ENCODE measurements at regions of chr19 and their contacts with region 1.

Region 1: GRCh38 chr19:58278157-58279041 is at the start of gene ZNF8:
- DNase-seq: peak; percentile 93 to 97 (median 95)
- H3K4me3 ChIP-seq: peak within 1 kb of the TSS; percentile 62 to 92
- H3K4me3 Mint-ChIP-seq: peak within 1 kb of the TSS; percentile 93 to 100 (median 98)
- H3K27ac ChIP-seq: peak within 1 kb of the TSS; percentile 73
- H3K27ac Mint-ChIP-seq: peak within 1 kb of the TSS; percentile 91 to 99 (median 96)
- H3K4me1 ChIP-seq: peaks cover 36% of the 10 kb centered on the region
- H3K4me1 Mint-ChIP-seq: peaks cover 28 to 57% (median 36%) of the 10 kb centered on the region in 4 donors
- H3K27me3 ChIP-seq: no peaks in the 10 kb centered on the region
- H3K27me3 Mint-ChIP-seq: no peaks in the 10 kb centered on the region
- total RNA-seq, gene ZNF8: 9.5 to 10.2 TPM

Region 2: DNA sequence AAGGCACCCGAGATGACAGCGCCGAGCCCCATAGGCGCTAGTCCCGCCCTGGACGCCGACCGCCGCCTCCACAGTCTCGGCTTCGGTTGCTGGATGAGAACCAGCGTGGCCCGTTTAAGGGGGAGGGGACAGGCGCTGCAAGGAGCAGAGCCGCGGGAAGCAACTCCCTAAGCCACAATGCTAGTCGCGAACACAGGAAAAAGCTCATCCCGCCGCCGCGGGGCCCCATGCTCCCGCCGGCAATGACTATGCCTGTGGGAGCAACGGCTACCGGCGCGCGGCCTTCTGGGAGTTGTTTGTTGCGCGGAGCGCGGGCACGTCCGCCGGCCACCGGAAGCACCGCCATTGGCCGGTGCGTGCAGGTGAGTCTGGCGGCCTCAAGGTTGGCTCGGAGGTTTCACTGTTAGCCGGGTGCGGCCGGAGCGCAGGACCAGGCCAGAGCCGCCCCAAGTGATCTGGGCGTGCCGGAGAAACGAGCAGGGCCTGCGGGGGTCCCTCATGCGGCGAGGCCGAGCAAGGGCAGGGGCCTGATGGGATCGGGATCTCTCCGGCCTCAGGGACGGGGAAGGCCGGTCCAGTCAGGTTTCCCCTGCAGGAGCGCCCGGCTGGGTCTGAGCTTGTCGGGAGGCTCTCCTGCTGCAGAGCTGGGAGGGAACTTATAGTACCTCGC is 49.7 kb before region 1 on chr19 and contains the start of gene ZNF544:
- CTCF ChIA-PET with region 1: interaction called, 3 read pairs
- POLR2A ChIA-PET with region 1: interaction called, 5 read pairs
- intact Hi-C with region 1: loop called (anchors 1 kb)
- DNase-seq: peak; percentile 33 to 60 (median 41)
- H3K4me3 ChIP-seq: peak within 1 kb of the TSS; percentile 68 to 70
- H3K4me3 Mint-ChIP-seq: peak within 1 kb of the TSS; percentile 92 to 97 (median 94)
- H3K27ac ChIP-seq: peak within 1 kb of the TSS; percentile 50
- H3K27ac Mint-ChIP-seq: peak within 1 kb of the TSS; percentile 82 to 95 (median 88)
- H3K4me1 ChIP-seq: peaks cover 15% of the 10 kb centered on the region
- H3K4me1 Mint-ChIP-seq: peaks cover 15 to 31% (median 24%) of the 10 kb centered on the region in 4 donors
- H3K27me3 ChIP-seq: no peaks in the 10 kb centered on the region
- H3K27me3 Mint-ChIP-seq: no peaks in the 10 kb centered on the region
- total RNA-seq, gene ZNF544: 63.3 to 67.6 TPM

Region 3: GRCh38 chr19:58326914-58327726 is 48.7 kb after region 1 on chr19 and contains the start of gene ZSCAN22:
- CTCF ChIA-PET with region 1: no interaction called
- POLR2A ChIA-PET with region 1: interaction called, 3 read pairs
- intact Hi-C with region 1: loop called (anchors 1 kb)
- DNase-seq: peak; percentile 80 to 89 (median 83)
- H3K4me3 ChIP-seq: peak within 1 kb of the TSS; percentile 32 to 77
- H3K4me3 Mint-ChIP-seq: no peak within 1 kb of the TSS
- H3K27ac ChIP-seq: peak within 1 kb of the TSS; percentile 80
- H3K27ac Mint-ChIP-seq: no peak within 1 kb of the TSS
- H3K4me1 ChIP-seq: peaks cover 25% of the 10 kb centered on the region
- H3K4me1 Mint-ChIP-seq: peaks cover 0 to 2% (median under 1%) of the 10 kb centered on the region in 4 donors
- H3K27me3 ChIP-seq: no peaks in the 10 kb centered on the region
- H3K27me3 Mint-ChIP-seq: no peaks in the 10 kb centered on the region
- total RNA-seq, gene ZSCAN22: 5.0 to 5.3 TPM

Region 4: GRCh38 chr19:58386576-58387337 is 108.4 kb after region 1 on chr19 and contains the start of gene RPS5:
- CTCF ChIA-PET with region 1: no interaction called
- POLR2A ChIA-PET with region 1: interaction called, 3 read pairs
- intact Hi-C with region 1: loop called (anchors 1 kb)
- DNase-seq: peak; percentile 94 to 99 (median 98)
- H3K4me3 ChIP-seq: peak within 1 kb of the TSS; percentile 56 to 65
- H3K4me3 Mint-ChIP-seq: peak within 1 kb of the TSS; percentile 93 to 99 (median 96)
- H3K27ac ChIP-seq: peak within 1 kb of the TSS; percentile 89
- H3K27ac Mint-ChIP-seq: peak within 1 kb of the TSS; percentile 96 to 99 (median 98)
- H3K4me1 ChIP-seq: peaks cover 41% of the 10 kb centered on the region
- H3K4me1 Mint-ChIP-seq: peaks cover 27 to 60% (median 39%) of the 10 kb centered on the region in 4 donors
- H3K27me3 ChIP-seq: no peaks in the 10 kb centered on the region
- H3K27me3 Mint-ChIP-seq: no peaks in the 10 kb centered on the region
- total RNA-seq, gene RPS5: 1,267 to 1,360 TPM

Region 5: DNA sequence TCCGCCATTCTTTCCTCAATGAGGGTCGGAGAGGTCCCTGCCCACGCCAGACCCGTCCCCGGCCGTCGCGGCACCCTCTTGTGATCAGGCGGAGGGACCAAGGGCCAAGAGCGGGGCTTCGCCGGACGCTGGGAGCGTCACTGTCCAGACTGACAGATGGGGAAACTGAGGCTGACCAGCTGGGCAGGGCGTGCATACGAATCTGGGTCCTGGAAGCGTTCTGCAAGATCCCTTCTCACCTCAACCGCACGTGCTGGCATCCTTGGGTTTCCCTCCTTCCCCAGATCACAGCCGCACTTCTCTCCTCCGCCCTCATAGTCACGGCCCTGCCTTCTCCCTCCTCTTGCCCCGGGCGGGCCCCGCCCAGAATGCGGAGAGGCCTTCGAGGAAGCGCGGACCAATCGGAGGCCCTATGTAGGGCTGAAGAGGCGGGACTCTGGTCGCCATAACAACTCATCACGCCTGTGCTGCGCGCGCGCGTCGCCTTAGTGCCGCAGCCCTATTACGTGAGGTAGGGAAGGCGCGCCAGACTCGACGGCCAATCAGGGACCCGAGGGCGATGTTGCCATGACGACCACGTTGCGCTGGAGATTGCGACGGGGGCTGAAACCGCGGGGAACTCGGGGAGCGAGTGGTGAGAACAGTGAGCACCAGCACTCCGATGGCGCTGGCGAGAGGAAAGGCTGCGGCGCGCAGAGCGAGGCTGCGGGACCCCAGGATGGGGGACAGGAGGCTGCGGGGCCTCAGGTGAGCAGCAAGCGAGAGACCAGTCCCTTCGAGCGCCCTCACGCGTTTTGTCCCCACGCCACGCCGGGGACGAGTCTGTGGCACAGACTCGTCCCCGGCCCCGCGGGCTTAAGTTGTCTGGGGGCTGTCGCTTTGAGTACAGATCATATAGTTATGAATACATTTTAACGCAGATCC is 122.8 kb after region 1 on chr19:
- CTCF ChIA-PET with region 1: no interaction called
- POLR2A ChIA-PET with region 1: no interaction called
- intact Hi-C with region 1: loop called (anchors 1 kb)
- DNase-seq: peak; percentile 98 to 100 (median 99)
- H3K4me3 ChIP-seq: peak overlapping the region; percentile 57 to 59
- H3K4me3 Mint-ChIP-seq: peak overlapping the region; percentile 87 to 97 (median 91)
- H3K27ac ChIP-seq: peak overlapping the region; percentile 74
- H3K27ac Mint-ChIP-seq: peak overlapping the region; percentile 89 to 99 (median 97)
- H3K4me1 ChIP-seq: peaks cover 20% of the 10 kb centered on the region
- H3K4me1 Mint-ChIP-seq: peaks cover 5 to 20% (median 10%) of the 10 kb centered on the region in 4 donors
- H3K27me3 ChIP-seq: peaks cover 8% of the 10 kb centered on the region
- H3K27me3 Mint-ChIP-seq: peaks cover 6 to 9% of the 10 kb centered on the region in 2 donors

Region 6: GRCh38 chr19:58408152-58409009 is 130.0 kb after region 1 on chr19 and contains the start of gene ZNF584:
- CTCF ChIA-PET with region 1: no interaction called
- POLR2A ChIA-PET with region 1: no interaction called
- intact Hi-C with region 1: loop called (anchors 2 kb)
- DNase-seq: peak; percentile 93 to 94 (median 93)
- H3K4me3 ChIP-seq: peak within 1 kb of the TSS; percentile 71 to 94
- H3K4me3 Mint-ChIP-seq: peak within 1 kb of the TSS; percentile 92 to 100 (median 96)
- H3K27ac ChIP-seq: peak within 1 kb of the TSS; percentile 77
- H3K27ac Mint-ChIP-seq: peak within 1 kb of the TSS; percentile 91 to 98 (median 95)
- H3K4me1 ChIP-seq: peaks cover 25% of the 10 kb centered on the region
- H3K4me1 Mint-ChIP-seq: peaks cover 21 to 39% (median 33%) of the 10 kb centered on the region in 4 donors
- H3K27me3 ChIP-seq: no peaks in the 10 kb centered on the region
- H3K27me3 Mint-ChIP-seq: no peaks in the 10 kb centered on the region
- total RNA-seq, gene ZNF584: 10.3 to 10.7 TPM

Region 7: DNA sequence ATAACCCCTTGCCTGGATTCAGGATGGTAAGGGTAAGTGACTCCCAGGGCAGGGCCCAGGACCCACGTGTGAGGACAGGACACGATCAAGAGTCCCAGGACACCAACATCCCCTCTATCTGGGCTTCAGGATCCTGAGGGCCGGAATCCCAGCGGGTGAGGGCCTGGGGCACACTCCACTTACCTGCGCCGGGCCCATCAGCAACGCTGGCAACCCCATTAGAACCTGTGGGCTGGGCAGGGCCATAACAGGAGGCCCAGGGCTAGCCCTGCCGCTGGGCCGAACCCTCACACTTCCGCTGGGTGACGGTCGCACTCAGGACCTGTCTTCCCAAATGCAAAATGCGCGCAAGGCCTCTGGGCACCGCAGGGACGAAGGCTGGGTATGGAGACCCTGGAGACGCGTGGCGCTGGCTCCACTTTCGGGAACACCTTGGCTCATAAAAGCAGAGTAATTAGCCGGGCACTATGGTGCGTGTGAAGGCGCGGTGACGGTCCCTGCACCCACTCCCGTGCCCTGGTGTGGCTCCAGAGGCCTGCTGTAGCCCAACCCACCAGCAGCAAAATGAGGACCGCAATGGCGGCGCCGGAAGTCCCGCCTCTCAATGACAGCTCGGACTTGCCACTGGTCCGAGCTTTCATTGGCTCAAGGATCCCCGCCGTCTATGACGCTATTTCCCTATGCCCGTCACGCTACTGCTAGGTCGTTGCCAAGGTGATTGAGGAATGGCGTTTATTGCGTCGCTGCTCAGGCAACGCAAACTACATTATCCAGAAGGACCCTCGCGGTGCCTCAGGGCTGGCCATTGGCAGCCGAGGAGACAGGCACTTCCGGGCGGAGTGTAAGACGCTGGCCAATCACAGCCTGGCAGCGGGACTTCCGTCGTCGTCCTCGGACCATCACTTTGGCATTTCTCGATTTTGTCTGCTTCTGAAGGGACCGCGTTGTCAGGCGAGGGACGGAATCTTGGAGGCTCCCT is 161.5 kb after region 1 on chr19 and contains the start of gene ZNF132:
- CTCF ChIA-PET with region 1: no interaction called
- POLR2A ChIA-PET with region 1: no interaction called
- intact Hi-C with region 1: no loop called
- DNase-seq: peak; percentile 93 to 99 (median 98)
- H3K4me3 ChIP-seq: peak within 1 kb of the TSS; percentile 72 to 80
- H3K4me3 Mint-ChIP-seq: peak within 1 kb of the TSS; percentile 87 to 97 (median 96)
- H3K27ac ChIP-seq: peak within 1 kb of the TSS; percentile 69
- H3K27ac Mint-ChIP-seq: peak within 1 kb of the TSS; percentile 82 to 100 (median 99)
- H3K4me1 ChIP-seq: peaks cover 18% of the 10 kb centered on the region
- H3K4me1 Mint-ChIP-seq: peaks cover 12 to 30% (median 22%) of the 10 kb centered on the region in 4 donors
- H3K27me3 ChIP-seq: no peaks in the 10 kb centered on the region
- H3K27me3 Mint-ChIP-seq: peaks cover 2 to 3% of the 10 kb centered on the region in 2 donors
- total RNA-seq, gene ZNF132: 9.5 to 11.7 TPM

Region 8: DNA sequence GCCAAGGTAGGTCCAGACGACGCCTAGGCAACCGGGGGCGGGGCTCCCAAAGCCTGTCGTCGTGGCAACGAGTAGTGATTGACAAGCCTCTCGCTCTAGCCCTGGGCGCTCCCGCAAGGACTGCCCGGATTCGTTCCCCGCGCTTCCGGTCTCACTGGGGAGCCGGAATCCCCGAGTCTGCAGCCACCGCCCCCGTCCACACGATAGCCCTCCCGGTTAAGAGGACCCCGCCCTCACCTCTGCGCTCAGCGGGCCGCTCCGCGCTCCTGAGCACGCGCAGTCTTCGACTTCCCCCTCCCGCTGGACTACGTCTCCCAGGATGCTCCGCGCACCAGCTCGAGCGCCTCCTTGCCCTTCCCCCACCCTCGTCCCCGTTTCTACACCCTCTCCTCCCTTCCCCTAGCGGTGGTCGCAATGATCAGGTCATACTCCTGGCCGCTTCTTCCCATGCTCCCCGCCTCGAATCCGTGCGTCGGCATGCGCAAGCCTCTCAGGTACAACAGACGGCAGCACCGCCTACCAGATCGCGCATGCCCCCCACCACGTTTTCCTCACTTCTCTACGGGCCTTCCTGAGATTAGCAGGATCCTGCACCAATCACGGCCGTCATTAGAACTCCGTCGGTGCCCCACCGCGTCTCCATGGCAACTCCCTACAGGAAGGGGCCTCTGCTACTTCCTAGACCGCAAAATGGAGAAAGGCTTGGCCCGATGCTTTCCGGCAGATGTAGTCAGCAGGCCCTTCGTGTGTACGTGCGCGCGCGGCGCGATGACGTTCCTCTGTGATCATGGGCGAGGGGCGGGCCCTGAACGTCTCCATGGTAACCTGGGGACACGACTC is 294.6 kb after region 1 on chr19 and contains the start of gene MZF1:
- CTCF ChIA-PET with region 1: no interaction called
- POLR2A ChIA-PET with region 1: no interaction called
- intact Hi-C with region 1: loop called (anchors 1 kb)
- DNase-seq: peak; percentile 99 to 100 (median 100)
- H3K4me3 ChIP-seq: peak within 1 kb of the TSS; percentile 67 to 78
- H3K4me3 Mint-ChIP-seq: peak within 1 kb of the TSS; percentile 89 to 99 (median 96)
- H3K27ac ChIP-seq: peak within 1 kb of the TSS; percentile 99
- H3K27ac Mint-ChIP-seq: peak within 1 kb of the TSS; percentile 96 to 100 (median 100)
- H3K4me1 ChIP-seq: peaks cover 29% of the 10 kb centered on the region
- H3K4me1 Mint-ChIP-seq: peaks cover 16 to 44% (median 32%) of the 10 kb centered on the region in 4 donors
- H3K27me3 ChIP-seq: no peaks in the 10 kb centered on the region
- H3K27me3 Mint-ChIP-seq: no peaks in the 10 kb centered on the region
- total RNA-seq, gene MZF1: 42.7 to 44.4 TPM